ENCODE measurements at regions of chr3 and their contacts with region 1.

Region 1: DNA sequence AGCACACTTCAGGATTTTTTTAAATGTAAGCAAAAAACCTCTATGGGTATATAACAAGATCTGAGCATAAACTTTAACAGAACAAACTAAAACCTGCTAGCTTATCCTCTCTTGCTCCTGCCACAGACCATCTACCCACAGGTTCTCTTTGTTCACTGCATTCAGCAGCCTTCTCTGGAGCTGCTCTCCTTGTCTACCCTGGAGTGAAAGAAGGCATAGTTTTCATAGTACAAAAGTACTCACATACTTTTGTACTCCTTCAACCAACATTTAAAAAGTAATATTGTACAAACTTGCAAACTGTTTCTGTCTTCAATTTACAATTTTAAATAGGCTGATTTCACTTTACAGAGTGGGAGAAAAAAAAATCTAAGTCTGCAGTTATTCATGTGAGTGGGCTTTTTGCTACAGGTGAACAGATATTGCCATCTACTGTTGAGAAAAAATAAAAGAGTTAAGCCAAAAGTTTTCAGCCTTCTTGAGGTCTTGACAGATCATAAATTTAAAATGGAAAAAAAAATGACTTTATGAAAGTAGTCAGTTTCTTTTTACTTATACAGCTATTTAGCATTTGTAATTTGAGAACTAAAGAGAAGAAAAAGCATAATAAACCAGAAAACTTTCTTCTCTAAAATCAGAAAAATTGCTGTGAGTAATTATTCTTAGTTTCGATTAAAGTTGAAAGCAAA is 20.4 kb downstream of the TERC start:
- DNase-seq: peak; percentile 30
- H3K4me3 ChIP-seq: no peak overlapping the region
- H3K27ac ChIP-seq: no peak overlapping the region
- H3K4me1 ChIP-seq: no peaks in the 10 kb centered on the region
- CTCF ChIP-seq: peak; percentile 85

Region 2: DNA sequence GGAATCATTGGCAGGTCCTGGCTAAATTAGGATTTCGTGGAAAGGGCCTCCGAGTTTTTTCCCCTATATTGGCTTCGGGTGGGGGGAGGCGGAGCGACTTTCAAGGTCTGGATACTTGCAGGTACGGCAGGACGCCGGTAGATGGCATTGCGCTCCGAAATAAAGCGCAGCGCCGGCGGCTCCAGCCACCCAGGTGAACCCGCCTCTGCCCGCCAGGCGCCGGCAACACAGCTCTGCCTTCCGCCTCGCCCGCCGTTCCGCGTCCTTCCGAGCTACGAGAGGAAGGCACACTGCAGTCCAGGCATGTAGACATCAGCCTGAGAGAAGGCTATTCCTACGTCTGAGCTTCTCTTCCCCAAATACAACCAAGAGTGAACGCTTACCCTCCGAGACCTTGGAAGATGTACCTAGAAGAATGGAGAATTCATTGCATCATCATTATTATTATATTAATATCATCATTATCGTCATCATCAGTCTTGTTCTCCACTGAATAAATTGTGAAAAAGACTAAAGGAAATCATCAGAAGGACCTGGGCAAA is 595.1 kb before region 1 on chr3:
- CTCF ChIA-PET with region 1: interaction called, 3 read pairs
- POLR2A ChIA-PET with region 1: interaction called, 4 read pairs
- intact Hi-C with region 1: loop called (anchors 2 kb)
- DNase-seq: peak; percentile 82
- H3K4me3 ChIP-seq: peak overlapping the region; percentile 27
- H3K27ac ChIP-seq: no peak overlapping the region
- H3K4me1 ChIP-seq: no peaks in the 10 kb centered on the region
- CTCF ChIP-seq: peak; percentile 84

Region 3: DNA sequence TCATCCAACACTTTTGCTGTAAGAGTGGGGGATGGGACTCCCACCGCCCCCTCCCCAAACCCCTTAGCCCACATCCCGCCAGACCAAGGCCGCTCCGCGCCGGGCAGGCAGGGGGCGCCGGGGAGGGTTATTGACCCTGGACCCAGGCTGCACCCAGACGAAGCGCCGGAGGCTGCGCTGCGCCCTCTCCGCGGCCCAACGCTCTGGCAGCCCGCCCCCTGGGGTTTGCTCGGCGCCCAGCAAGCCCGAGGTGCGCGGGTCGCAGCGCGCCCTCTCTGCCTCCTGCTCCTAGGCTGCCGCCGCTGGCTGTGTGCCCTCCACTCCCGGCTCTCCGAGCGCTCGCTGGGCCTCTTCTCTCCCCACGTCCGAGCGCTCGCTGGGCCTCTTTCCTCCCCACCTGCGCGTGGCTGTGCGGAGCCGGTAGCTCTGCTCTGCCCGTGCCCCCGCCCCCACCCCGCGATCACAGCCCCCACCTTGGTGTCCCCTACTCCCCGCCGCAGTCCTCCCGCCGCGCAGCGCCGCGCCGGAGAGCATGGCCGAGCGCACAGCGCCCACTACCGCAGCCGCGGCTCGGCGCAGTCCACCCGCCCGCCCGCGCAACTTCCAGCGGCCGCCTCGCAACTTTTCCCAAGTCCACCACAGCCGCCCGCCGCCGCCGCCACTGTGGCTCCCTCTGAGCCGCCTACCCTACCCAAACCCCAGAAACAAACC is 82.2 kb before region 1 on chr3:
- CTCF ChIA-PET with region 1: no interaction called
- POLR2A ChIA-PET with region 1: no interaction called
- intact Hi-C with region 1: loop called (anchors 5 kb)
- DNase-seq: peak; percentile 73
- H3K4me3 ChIP-seq: peak overlapping the region; percentile 59
- H3K27ac ChIP-seq: no peak overlapping the region
- H3K4me1 ChIP-seq: no peaks in the 10 kb centered on the region
- CTCF ChIP-seq: peak; percentile 56